Caco-2 (cell line): ENCODE measurements at regions of chr17 and their contacts with region 1.

Region 1: GRCh38 chr17:60435244-60436167 is 13.2 kb downstream of the CHCT1 start:
- DNase-seq: peak; percentile 66 to 79
- H3K4me3 ChIP-seq: no peak overlapping the region
- H3K4me3 Mint-ChIP-seq: no peak overlapping the region
- H3K27ac Mint-ChIP-seq: no peak overlapping the region
- H3K4me1 ChIP-seq: no peaks in the 10 kb centered on the region
- H3K4me1 Mint-ChIP-seq: peaks cover 9% of the 10 kb centered on the region
- H3K27me3 ChIP-seq: no peaks in the 10 kb centered on the region
- H3K27me3 Mint-ChIP-seq: no peaks in the 10 kb centered on the region
- CTCF ChIP-seq: peak; percentile 85 to 93

Region 2: DNA sequence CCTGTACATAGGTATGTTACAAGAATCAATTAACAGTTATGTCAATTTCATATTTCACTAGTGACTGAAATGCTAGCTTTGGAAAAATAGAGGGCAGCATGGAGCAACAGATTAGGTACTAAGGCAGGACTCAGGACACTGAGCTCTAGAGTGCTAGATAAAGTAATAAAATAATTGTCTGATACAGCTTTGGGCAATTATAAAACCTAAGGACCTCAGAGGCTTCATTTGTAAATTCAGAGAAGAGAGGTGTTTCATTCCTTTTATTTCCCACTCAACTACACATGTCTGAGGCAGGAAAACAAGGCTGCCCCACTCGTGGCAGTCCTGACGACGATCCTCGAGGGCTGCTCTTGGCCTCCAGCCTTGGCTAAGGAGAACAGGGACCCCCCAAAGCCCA is 204.3 kb before region 1 on chr17:
- CTCF ChIA-PET with region 1: interaction called, 6 read pairs
- POLR2A ChIA-PET with region 1: no interaction called
- intact Hi-C with region 1: loop called (anchors 1 kb)
- DNase-seq: no peak
- H3K4me3 ChIP-seq: no peak overlapping the region
- H3K4me3 Mint-ChIP-seq: no peak overlapping the region
- H3K27ac Mint-ChIP-seq: peak overlapping the region; percentile 53
- H3K4me1 ChIP-seq: no peaks in the 10 kb centered on the region
- H3K4me1 Mint-ChIP-seq: no peaks in the 10 kb centered on the region
- H3K27me3 ChIP-seq: no peaks in the 10 kb centered on the region
- H3K27me3 Mint-ChIP-seq: no peaks in the 10 kb centered on the region
- CTCF ChIP-seq: peak; percentile 46 to 49

Region 3: GRCh38 chr17:60421935-60422662 is 13.4 kb before region 1 on chr17 and contains the start of gene CHCT1:
- CTCF ChIA-PET with region 1: no interaction called
- POLR2A ChIA-PET with region 1: no interaction called
- intact Hi-C with region 1: loop called (anchors 2 kb)
- DNase-seq: no peak
- H3K4me3 ChIP-seq: no peak within 1 kb of the TSS
- H3K4me3 Mint-ChIP-seq: peak within 1 kb of the TSS; percentile 20
- H3K27ac Mint-ChIP-seq: no peak within 1 kb of the TSS
- H3K4me1 ChIP-seq: no peaks in the 10 kb centered on the region
- H3K4me1 Mint-ChIP-seq: no peaks in the 10 kb centered on the region
- H3K27me3 ChIP-seq: no peaks in the 10 kb centered on the region
- H3K27me3 Mint-ChIP-seq: no peaks in the 10 kb centered on the region
- CTCF ChIP-seq: no peak
- total RNA-seq, gene CHCT1: not detected in 2 replicates